Left ventricle myocardium inferior (tissue), 1 donor: ENCODE measurements at regions of chr17 and their contacts with region 1.

Region 1: DNA sequence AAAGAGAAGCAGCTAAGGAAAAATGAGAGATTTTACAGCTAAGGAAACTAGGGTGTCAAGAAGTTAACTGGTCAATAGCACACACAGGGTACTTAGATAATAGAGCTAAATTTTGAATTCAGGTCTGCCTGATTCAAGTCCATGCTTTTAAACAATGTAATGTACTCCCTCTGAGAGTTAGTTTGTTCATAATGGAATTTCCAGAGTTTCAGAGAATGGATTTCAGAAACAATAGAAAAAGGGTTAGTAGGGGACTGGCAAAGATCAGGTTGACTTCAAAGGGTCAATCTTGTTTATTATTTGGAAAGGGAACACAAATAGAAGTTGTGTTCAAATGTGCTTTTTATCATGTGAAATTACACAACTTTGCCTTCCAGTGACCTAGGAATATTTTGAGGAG is 17.9 kb downstream of the NSRP1 start:
- DNase-seq: no peak
- H3K4me3 ChIP-seq: no peak overlapping the region
- H3K27ac ChIP-seq: no peak overlapping the region
- H3K4me1 ChIP-seq: peaks cover 24% of the 10 kb centered on the region
- H3K27me3 ChIP-seq: no peaks in the 10 kb centered on the region
- CTCF ChIP-seq: no peak

Region 2: DNA sequence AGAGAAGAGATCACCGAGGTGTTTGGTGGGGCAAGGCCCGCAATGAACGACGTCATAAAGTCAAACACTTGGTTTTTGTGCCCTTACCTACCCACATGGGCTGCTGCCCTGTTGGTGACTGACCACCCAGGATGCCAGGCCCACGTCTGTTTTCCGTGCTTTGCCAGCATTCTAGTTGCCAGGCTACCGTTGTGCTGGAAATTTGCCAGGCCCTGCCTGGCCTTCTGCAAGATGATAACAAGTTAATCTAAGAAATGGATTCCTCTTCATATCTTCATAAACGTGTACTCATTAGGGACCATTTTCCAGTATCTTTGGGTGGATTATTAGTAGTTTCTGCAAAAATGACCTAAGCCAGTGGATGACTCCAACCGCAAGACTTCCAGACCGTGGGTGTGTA is 65.6 kb after region 1 on chr17:
- intact Hi-C with region 1: no loop called
- DNase-seq: no peak
- H3K4me3 ChIP-seq: no peak overlapping the region
- H3K27ac ChIP-seq: no peak overlapping the region
- H3K4me1 ChIP-seq: no peaks in the 10 kb centered on the region
- H3K27me3 ChIP-seq: peaks cover 5% of the 10 kb centered on the region
- CTCF ChIP-seq: no peak

Region 3: DNA sequence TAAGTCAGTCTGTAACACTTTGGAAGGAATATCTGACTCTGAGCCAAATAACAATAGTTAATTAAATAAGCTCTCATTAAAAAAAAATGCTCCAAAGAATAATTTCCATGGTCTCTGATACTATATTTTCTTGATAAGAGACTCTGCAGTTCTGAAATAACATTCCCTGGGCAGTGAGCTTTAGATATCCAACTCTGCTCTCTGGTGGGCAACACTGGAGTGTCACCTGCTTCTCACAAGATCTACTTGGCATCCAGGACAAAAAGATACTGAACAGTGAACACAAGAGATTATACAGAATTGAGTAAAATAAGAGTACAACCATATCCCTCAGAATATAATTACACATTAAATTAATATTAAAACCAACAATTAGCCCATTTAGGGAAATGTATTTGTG is 143.5 kb after region 1 on chr17:
- intact Hi-C with region 1: loop called (anchors 5 kb)
- DNase-seq: peak; percentile 20
- H3K4me3 ChIP-seq: no peak overlapping the region
- H3K27ac ChIP-seq: no peak overlapping the region
- H3K4me1 ChIP-seq: peaks cover 6% of the 10 kb centered on the region
- H3K27me3 ChIP-seq: no peaks in the 10 kb centered on the region
- CTCF ChIP-seq: peak; percentile 66